Caco-2 (cell line): ENCODE measurements at regions of chr3 and their contacts with region 1.

Region 1: GRCh38 chr3:181839039-181839915 is 127.6 kb downstream of the SOX2 start:
- DNase-seq: peak; percentile 26 to 42
- H3K4me3 ChIP-seq: no peak overlapping the region
- H3K4me3 Mint-ChIP-seq: peak overlapping the region; percentile 12
- H3K27ac Mint-ChIP-seq: no peak overlapping the region
- H3K4me1 ChIP-seq: peaks cover 10% of the 10 kb centered on the region; the same call in 1 of the 2 replicates
- H3K4me1 Mint-ChIP-seq: peaks cover 12% of the 10 kb centered on the region
- H3K27me3 ChIP-seq: no peaks in the 10 kb centered on the region
- H3K27me3 Mint-ChIP-seq: no peaks in the 10 kb centered on the region
- CTCF ChIP-seq: peak in 1 of 2 experiments; percentile 13

Region 2: GRCh38 chr3:181610083-181610972 is 228.9 kb before region 1 on chr3:
- CTCF ChIA-PET with region 1: no interaction called
- POLR2A ChIA-PET with region 1: no interaction called
- intact Hi-C with region 1: no loop called
- DNase-seq: no peak
- H3K4me3 ChIP-seq: no peak overlapping the region
- H3K4me3 Mint-ChIP-seq: no peak overlapping the region
- H3K27ac Mint-ChIP-seq: no peak overlapping the region
- H3K4me1 ChIP-seq: no peaks in the 10 kb centered on the region
- H3K4me1 Mint-ChIP-seq: no peaks in the 10 kb centered on the region
- H3K27me3 ChIP-seq: no peaks in the 10 kb centered on the region
- H3K27me3 Mint-ChIP-seq: no peaks in the 10 kb centered on the region
- CTCF ChIP-seq: no peak

Region 3: GRCh38 chr3:181823716-181824115 is 15.6 kb before region 1 on chr3:
- CTCF ChIA-PET with region 1: no interaction called
- POLR2A ChIA-PET with region 1: no interaction called
- intact Hi-C with region 1: no loop called
- DNase-seq: no peak
- H3K4me3 ChIP-seq: no peak overlapping the region
- H3K4me3 Mint-ChIP-seq: no peak overlapping the region
- H3K27ac Mint-ChIP-seq: no peak overlapping the region
- H3K4me1 ChIP-seq: no peaks in the 10 kb centered on the region
- H3K4me1 Mint-ChIP-seq: peaks cover 11% of the 10 kb centered on the region
- H3K27me3 ChIP-seq: no peaks in the 10 kb centered on the region
- H3K27me3 Mint-ChIP-seq: no peaks in the 10 kb centered on the region
- CTCF ChIP-seq: no peak

Region 4: GRCh38 chr3:181851059-181851458 is 11.8 kb after region 1 on chr3:
- CTCF ChIA-PET with region 1: no interaction called
- POLR2A ChIA-PET with region 1: no interaction called
- intact Hi-C with region 1: loop called (anchors 1 kb)
- DNase-seq: peak; percentile 61 to 69
- H3K4me3 ChIP-seq: no peak overlapping the region
- H3K4me3 Mint-ChIP-seq: peak overlapping the region; percentile 35
- H3K27ac Mint-ChIP-seq: peak overlapping the region; percentile 87
- H3K4me1 ChIP-seq: peaks cover 26% of the 10 kb centered on the region
- H3K4me1 Mint-ChIP-seq: peaks cover 22% of the 10 kb centered on the region
- H3K27me3 ChIP-seq: no peaks in the 10 kb centered on the region
- H3K27me3 Mint-ChIP-seq: no peaks in the 10 kb centered on the region
- CTCF ChIP-seq: no peak